ENCODE measurements at regions of chr5 and their contacts with region 1.

Region 1: GRCh38 chr5:130141659-130142320 is 237.5 kb downstream of the CHSY3 start:
- DNase-seq: no peak
- H3K4me3 ChIP-seq: no peak overlapping the region
- CTCF ChIP-seq: peak; percentile 81

Region 2: GRCh38 chr5:129904102-129904666 is 237.6 kb before region 1 on chr5 and contains the start of gene CHSY3:
- CTCF ChIA-PET with region 1: interaction called, 39 read pairs
- POLR2A ChIA-PET with region 1: interaction called, 3 read pairs
- DNase-seq: no peak
- H3K4me3 ChIP-seq: peak within 1 kb of the TSS; percentile 83
- CTCF ChIP-seq: no peak

Region 3: DNA sequence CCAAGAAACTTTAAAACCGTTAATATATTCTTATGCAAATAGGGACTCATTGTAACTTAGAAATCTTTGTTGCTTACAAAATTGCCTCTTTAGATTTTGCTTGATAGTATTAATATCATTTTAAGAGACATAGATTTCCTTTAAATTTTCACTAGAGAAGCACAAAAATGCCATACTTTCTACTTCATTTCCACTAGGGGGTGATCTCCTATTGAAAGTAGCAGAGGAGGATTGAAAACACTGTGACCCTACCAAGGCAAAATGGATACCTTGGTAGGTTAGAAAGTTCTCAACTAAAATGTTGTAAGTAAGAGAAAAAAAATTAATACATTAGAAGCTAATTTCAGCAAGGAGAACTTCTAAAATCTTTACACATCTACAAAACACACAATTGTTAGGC is 32.6 kb before region 1 on chr5:
- CTCF ChIA-PET with region 1: interaction called, 55 read pairs
- POLR2A ChIA-PET with region 1: no interaction called
- DNase-seq: no peak
- H3K4me3 ChIP-seq: no peak overlapping the region
- CTCF ChIP-seq: peak; percentile 40

Region 4: GRCh38 chr5:130126746-130127145 is 15.0 kb before region 1 on chr5:
- CTCF ChIA-PET with region 1: interaction called, 27 read pairs
- POLR2A ChIA-PET with region 1: no interaction called
- DNase-seq: no peak
- H3K4me3 ChIP-seq: no peak overlapping the region
- CTCF ChIP-seq: no peak

Region 5: DNA sequence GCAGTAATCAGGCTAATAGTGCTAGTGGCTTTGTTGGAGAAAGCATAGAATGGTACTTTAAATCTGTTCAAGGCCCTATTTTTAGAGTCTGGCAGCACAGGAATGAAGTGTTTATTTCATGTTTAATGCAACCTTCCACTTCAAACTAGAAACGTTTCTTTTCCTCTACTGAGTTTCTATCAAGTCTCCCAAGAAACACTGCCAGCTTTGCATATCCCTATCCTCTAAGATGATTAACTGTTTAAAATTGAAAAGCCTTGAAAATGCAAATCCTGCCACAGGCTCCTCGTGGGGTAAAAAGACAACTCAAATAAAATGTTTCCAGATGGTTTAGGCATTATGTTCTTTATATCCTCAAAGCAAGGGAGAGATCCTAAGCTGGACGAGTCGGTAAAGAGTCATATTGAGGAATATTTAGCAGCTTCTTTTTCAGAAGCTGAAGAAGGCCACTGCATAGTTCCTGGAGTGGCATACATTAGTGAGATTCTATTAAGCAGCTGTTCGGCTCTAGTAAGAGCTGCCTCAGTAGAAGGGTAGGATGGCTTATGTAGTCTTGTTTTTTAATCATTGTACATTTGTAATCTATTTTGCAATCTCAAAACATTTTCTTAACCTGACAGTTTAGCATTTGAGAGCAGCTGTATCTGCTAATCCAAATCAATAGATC is 13.7 kb after region 1 on chr5:
- CTCF ChIA-PET with region 1: interaction called, 43 read pairs
- POLR2A ChIA-PET with region 1: interaction called, 3 read pairs
- DNase-seq: no peak
- H3K4me3 ChIP-seq: no peak overlapping the region
- CTCF ChIP-seq: no peak

Region 6: DNA sequence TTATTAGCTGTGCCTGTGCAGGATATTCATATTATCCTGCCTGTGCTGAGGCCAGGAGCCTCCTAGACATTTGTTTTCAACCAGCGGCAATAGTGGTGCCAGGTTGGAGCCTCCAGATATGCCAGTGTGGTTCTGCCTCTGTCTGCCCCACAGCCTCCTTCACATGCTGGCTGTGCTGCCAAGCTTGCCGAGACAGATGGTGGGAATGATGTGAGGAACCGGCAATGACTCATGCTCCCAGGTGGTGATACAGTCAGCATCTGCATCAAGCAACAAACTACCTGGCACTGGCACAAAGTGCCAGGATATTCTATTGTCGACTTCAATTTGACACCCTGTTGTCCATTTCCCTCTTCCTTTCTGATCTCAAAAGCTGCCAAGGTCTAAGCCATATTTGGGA is 48.2 kb after region 1 on chr5:
- CTCF ChIA-PET with region 1: no interaction called
- POLR2A ChIA-PET with region 1: no interaction called
- DNase-seq: no peak
- H3K4me3 ChIP-seq: no peak overlapping the region
- CTCF ChIP-seq: no peak

Measured in AG04449 (cell line).